ENCODE measurements at regions of chr1 and their contacts with region 1.

Region 1: DNA sequence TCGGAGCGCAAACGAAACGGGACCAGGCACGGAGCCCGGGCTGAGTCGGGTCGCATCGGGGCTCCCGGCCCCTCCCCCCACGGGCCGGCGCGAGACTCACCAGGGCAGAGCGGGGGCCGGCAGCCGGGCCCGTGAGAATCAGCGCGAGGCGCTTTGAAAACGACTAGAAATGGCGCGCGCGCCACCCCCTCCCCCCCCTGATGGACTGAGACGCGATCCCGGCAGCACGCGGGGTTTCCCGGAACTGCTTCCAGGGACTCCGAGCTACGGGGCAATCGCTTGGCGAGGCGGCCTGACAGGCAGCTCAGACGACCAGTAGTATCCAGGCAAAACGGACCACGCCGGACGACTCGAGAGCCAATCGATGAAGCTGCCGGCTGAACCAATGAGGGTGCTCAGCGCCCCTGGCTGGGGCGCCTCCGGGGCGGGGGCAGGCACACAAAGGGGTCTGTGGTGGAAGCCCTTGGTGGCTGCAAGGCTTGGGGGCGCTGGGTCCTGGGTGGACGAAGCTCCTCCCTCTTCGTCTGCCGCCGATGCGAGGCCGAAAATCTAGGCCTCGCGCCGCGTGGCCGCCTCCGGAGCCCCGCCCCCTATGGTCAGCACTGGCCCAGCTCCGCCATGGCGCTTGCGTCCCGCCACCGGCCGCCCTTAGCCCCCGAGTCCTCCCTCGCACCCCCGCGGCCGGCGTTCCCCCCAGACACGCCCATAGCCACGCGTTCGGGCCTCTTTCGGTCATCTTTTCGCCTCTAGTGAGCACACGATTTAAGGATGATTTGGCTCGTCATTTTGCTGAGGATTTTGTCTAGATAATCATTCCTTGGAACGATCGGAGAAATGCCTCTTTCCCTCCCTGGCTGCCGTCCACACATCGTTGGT is at the start of gene HNRNPR:
- DNase-seq: peak; percentile 98 to 99
- ATAC-seq: peak; percentile 92 to 98 (median 94)
- H3K4me3 ChIP-seq: peak within 1 kb of the TSS; percentile 90
- H3K4me3 Mint-ChIP-seq: peak within 1 kb of the TSS; percentile 94
- H3K27ac ChIP-seq: peak within 1 kb of the TSS; percentile 86
- H3K27ac Mint-ChIP-seq: peak within 1 kb of the TSS; percentile 86 to 98
- H3K4me1 ChIP-seq: peaks cover 12% of the 10 kb centered on the region
- H3K4me1 Mint-ChIP-seq: peaks cover 47 to 49% of the 10 kb centered on the region in 2 donors
- H3K27me3 ChIP-seq: no peaks in the 10 kb centered on the region
- H3K27me3 Mint-ChIP-seq: no peaks in the 10 kb centered on the region
- CTCF ChIP-seq: no peak
- total RNA-seq, gene HNRNPR: 126 to 134 (median 128) TPM

Region 2: DNA sequence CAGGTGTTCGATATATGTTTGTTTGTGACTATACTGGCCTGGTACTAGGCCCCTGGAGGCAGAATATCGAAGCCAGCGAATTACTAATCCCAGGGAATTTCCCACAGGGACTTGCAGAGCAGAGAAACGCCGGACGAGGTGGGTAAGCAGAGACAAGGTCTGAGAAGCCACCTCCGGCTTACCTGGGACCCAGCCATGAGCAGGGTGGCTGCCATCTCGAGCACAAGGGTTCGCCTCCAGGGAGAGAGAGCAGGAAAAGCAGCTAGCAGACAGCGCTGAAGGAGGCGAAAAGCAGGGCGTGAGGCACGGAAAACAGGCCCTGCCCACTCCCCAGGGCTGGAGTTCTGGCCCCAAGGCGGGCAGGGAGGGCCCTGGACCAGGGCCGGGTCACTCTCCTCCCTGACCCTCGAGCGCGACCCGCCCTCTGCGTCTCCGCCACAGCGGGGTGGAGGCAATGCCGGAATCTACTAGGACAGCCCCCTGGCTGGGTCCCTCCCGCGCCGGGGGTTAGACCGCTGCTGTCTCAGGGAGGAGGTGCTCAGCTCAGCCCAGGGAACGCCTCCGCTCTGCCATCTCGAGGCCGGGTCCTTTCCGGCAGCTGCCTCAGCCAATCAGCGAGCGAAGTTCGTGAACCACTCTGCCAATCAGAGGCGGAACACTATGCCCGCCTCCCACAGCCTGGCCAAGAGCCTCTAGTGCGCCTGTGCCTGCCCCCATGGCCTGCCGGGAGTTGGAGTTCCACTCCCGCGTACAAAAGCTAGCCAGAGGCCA is 23.6 kb after region 1 on chr1:
- intact Hi-C with region 1: loop called (anchors 1 kb)
- DNase-seq: peak; percentile 96 to 99
- ATAC-seq: peak; percentile 88 to 96 (median 90)
- H3K4me3 ChIP-seq: peak overlapping the region; percentile 98
- H3K4me3 Mint-ChIP-seq: peak overlapping the region; percentile 95
- H3K27ac ChIP-seq: peak overlapping the region; percentile 85
- H3K27ac Mint-ChIP-seq: peak overlapping the region; percentile 93 to 98
- H3K4me1 ChIP-seq: peaks cover 21% of the 10 kb centered on the region
- H3K4me1 Mint-ChIP-seq: peaks cover 35 to 43% of the 10 kb centered on the region in 2 donors
- H3K27me3 ChIP-seq: no peaks in the 10 kb centered on the region
- H3K27me3 Mint-ChIP-seq: no peaks in the 10 kb centered on the region
- CTCF ChIP-seq: no peak

Region 3: GRCh38 chr1:23403735-23404486 is 59.6 kb after region 1 on chr1:
- intact Hi-C with region 1: loop called (anchors 2 kb)
- DNase-seq: peak; percentile 74 to 86
- ATAC-seq: peak; percentile 80 to 96 (median 93)
- H3K4me3 ChIP-seq: no peak overlapping the region
- H3K4me3 Mint-ChIP-seq: no peak overlapping the region
- H3K27ac ChIP-seq: no peak overlapping the region
- H3K27ac Mint-ChIP-seq: no peak overlapping the region
- H3K4me1 ChIP-seq: peaks cover 6% of the 10 kb centered on the region
- H3K4me1 Mint-ChIP-seq: peaks cover 0 to 6% of the 10 kb centered on the region in 2 donors
- H3K27me3 ChIP-seq: no peaks in the 10 kb centered on the region
- H3K27me3 Mint-ChIP-seq: no peaks in the 10 kb centered on the region
- CTCF ChIP-seq: peak; percentile 86

Measured in natural killer cell (primary cell).